ENCODE measurements at regions of chr9 and their contacts with region 1.

Region 1: GRCh38 chr9:6584881-6585597 is 60.5 kb downstream of the GLDC start:
- DNase-seq: no peak
- H3K4me3 ChIP-seq: no peak overlapping the region
- H3K27me3 ChIP-seq: peaks cover 2% of the 10 kb centered on the region; the same call in 1 of the 2 replicates
- CTCF ChIP-seq: peak; percentile 34

Region 2: DNA sequence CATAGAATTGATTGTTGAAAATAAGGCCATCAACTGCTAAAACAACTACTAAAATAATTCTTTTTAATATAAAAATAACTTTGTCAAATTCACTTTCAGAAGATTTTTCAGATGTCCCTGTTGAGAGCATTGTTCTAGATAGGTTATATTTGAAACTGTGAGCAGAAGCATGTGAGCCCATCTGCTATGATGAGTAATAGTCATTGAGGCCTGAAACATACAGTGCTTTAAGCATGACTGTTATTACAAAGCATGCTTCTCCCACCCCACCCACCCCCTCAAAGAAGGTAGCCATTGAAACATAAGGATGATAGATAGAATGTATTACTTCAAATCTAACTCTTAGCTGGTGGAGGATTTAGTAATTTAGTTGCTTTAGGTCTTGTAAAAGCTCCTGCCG is 86.1 kb before region 1 on chr9:
- CTCF ChIA-PET with region 1: no interaction called
- POLR2A ChIA-PET with region 1: no interaction called
- DNase-seq: no peak
- H3K4me3 ChIP-seq: no peak overlapping the region
- H3K27me3 ChIP-seq: no peaks in the 10 kb centered on the region
- CTCF ChIP-seq: no peak

Region 3: GRCh38 chr9:6538666-6539071 is 46.4 kb before region 1 on chr9:
- CTCF ChIA-PET with region 1: no interaction called
- POLR2A ChIA-PET with region 1: no interaction called
- DNase-seq: no peak
- H3K4me3 ChIP-seq: no peak overlapping the region
- H3K27me3 ChIP-seq: peaks cover 3% of the 10 kb centered on the region; the same call in 1 of the 2 replicates
- CTCF ChIP-seq: no peak

Region 4: DNA sequence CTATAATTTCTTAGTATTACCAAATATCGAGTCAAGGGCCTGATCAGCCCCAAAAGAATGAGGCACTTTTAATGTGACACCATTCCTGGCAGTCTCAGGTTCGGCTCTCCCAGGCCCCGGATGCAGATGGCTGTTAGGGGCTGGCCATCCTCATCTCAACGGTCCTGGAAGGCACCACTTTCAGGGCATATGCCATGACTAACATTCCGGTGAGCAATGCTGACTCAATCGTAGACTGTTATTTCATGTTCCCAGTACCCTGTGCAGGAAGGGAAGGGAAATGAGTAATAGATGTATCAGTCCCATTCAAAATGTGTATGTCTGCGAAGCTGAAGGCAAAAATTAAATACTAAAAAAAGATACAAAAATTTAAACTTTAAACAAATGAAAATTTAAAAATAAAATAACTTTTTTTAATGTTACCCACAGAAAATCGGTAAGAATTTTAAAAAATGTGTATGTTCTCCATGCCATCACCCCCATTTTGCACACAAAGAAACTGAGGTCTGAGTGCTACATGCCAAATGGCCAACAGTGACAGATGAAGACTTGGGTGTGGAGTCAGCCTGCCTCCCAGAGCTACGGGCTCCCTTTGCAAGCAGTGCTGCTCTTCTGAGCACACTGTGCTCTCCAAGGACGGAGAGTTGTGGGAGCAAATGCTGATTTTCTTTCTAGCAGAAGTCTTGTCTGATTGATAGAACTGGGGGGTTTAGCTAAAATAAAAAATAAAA is 18.5 kb before region 1 on chr9:
- CTCF ChIA-PET with region 1: interaction called, 11 read pairs
- POLR2A ChIA-PET with region 1: interaction called, 5 read pairs
- DNase-seq: peak; percentile 85
- H3K4me3 ChIP-seq: peak overlapping the region; percentile 29
- H3K27me3 ChIP-seq: no peaks in the 10 kb centered on the region
- CTCF ChIP-seq: no peak

Region 5: DNA sequence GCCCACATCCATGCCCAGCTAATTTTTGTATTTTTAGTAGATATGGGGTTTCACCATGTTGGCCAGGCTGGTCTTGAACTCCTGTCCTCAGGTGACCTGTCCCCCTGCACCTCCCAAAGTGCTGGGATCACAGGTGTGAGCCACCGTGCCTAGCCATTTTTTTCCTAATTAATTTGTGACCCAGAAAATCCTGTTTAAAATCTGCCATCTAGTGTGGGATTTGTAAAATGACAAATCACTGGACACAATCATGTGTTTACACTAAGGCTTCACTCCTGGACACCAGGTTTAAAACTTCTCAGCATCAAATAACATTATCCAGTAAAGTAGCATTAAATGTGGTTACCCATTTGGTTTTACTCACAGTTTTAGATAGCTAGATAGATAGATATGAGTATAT is 154.2 kb after region 1 on chr9:
- CTCF ChIA-PET with region 1: interaction called, 13 read pairs
- POLR2A ChIA-PET with region 1: no interaction called
- DNase-seq: no peak
- H3K4me3 ChIP-seq: no peak overlapping the region
- H3K27me3 ChIP-seq: no peaks in the 10 kb centered on the region
- CTCF ChIP-seq: peak; percentile 34; the same call in 1 of the 2 replicates